ENCODE measurements at regions of chr2 and their contacts with region 1.

Region 1: DNA sequence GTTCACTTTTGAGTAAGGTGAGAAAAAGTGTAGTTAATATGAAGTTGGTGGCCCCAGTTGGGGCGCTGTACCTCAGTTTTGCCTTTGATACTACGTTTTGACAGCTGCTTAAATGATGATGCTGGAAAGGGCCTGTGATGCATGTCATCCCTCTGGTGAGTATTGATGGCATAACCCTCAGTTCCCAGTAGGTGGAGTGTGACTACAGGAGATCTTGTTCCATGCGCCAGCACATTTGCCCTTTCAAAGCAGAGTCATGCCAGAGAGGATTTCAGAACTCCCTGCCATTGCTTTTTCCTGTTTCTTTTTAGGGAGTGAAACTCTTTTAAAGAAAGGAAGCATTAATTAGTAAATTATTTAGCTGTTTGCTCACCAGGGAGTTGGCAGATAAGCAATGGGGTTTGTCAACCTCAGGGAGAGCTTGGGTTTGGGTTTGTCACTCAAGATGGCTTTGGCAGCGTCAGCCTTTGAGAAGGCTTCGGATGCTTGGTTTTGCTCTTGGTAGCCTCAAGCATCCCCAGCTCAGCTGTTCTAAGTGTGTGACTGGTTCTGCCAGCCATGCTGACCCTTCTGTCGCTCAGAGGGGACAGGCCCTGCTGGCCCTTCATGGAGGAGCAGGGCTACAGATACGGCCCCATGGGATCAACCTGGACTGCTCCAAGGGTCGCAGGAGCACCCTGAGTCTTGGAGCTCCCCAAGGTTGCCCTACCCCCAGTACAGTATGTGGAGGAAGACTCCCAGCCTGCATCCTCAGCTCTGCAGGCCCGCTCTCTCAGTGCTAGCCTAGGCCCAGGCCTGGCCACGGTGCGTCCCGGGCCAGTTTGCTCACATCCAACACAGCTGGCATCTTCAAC is 29.1 kb downstream of the ARMC9 start:
- DNase-seq: peak in 8 of 9 donors; percentile 21 to 55 (median 34)
- ATAC-seq: peak; percentile 95
- H3K4me3 ChIP-seq: no peak overlapping the region
- H3K4me3 Mint-ChIP-seq: no peak overlapping the region
- H3K27ac ChIP-seq: no peak overlapping the region
- H3K27ac Mint-ChIP-seq: peak overlapping the region in 1 of 9 donors; percentile 5
- H3K4me1 ChIP-seq: no peaks in the 10 kb centered on the region
- H3K4me1 Mint-ChIP-seq: no peaks in the 10 kb centered on the region
- H3K27me3 ChIP-seq: peaks cover 0 to 3% of the 10 kb centered on the region in 2 donors
- H3K27me3 Mint-ChIP-seq: no peaks in the 10 kb centered on the region

Region 2: GRCh38 chr2:231104115-231104713 is 123.3 kb before region 1 on chr2:
- CTCF ChIA-PET with region 1: interaction called, 3 read pairs
- POLR2A ChIA-PET with region 1: no interaction called
- intact Hi-C with region 1: loop called in 1 of 2 experiments (anchors 1 kb)
- DNase-seq: peak in 8 of 9 donors; percentile 10 to 58 (median 40)
- ATAC-seq: peak; percentile 84
- H3K4me3 ChIP-seq: no peak overlapping the region
- H3K4me3 Mint-ChIP-seq: no peak overlapping the region
- H3K27ac ChIP-seq: no peak overlapping the region
- H3K27ac Mint-ChIP-seq: peak overlapping the region in 2 of 9 donors; percentile 10 to 12
- H3K4me1 ChIP-seq: no peaks in the 10 kb centered on the region
- H3K4me1 Mint-ChIP-seq: peaks cover 0 to 6% (median 5%) of the 10 kb centered on the region in 7 donors
- H3K27me3 ChIP-seq: no peaks in the 10 kb centered on the region
- H3K27me3 Mint-ChIP-seq: no peaks in the 10 kb centered on the region

Region 3: GRCh38 chr2:231191896-231192872 is 35.4 kb before region 1 on chr2:
- CTCF ChIA-PET with region 1: no interaction called
- POLR2A ChIA-PET with region 1: no interaction called
- intact Hi-C with region 1: no loop called
- DNase-seq: no peak
- ATAC-seq: no peak
- H3K4me3 ChIP-seq: no peak overlapping the region
- H3K4me3 Mint-ChIP-seq: no peak overlapping the region
- H3K27ac ChIP-seq: no peak overlapping the region
- H3K27ac Mint-ChIP-seq: no peak overlapping the region
- H3K4me1 ChIP-seq: no peaks in the 10 kb centered on the region
- H3K4me1 Mint-ChIP-seq: peaks cover 0 to 3% (median 0%) of the 10 kb centered on the region in 7 donors
- H3K27me3 ChIP-seq: peaks cover 0 to 3% of the 10 kb centered on the region in 2 donors
- H3K27me3 Mint-ChIP-seq: peaks cover 16 to 64% (median 24%) of the 10 kb centered on the region in 5 donors

Region 4: GRCh38 chr2:231411831-231412617 is 184.5 kb after region 1 on chr2:
- CTCF ChIA-PET with region 1: no interaction called
- POLR2A ChIA-PET with region 1: no interaction called
- intact Hi-C with region 1: loop called (anchors 1 to 2 kb)
- DNase-seq: peak; percentile 10 to 63 (median 40)
- ATAC-seq: peak; percentile 97
- H3K4me3 ChIP-seq: peak overlapping the region; percentile 20
- H3K4me3 Mint-ChIP-seq: peak overlapping the region; percentile 44 to 73 (median 66)
- H3K27ac ChIP-seq: no peak overlapping the region
- H3K27ac Mint-ChIP-seq: no peak overlapping the region
- H3K4me1 ChIP-seq: peaks cover 0 to 9% of the 10 kb centered on the region in 2 donors
- H3K4me1 Mint-ChIP-seq: peaks cover under 1 to 8% (median 5%) of the 10 kb centered on the region in 7 donors
- H3K27me3 ChIP-seq: peaks cover 4 to 8% of the 10 kb centered on the region in 2 donors
- H3K27me3 Mint-ChIP-seq: peaks cover 17 to 48% (median 32%) of the 10 kb centered on the region in 5 donors

Region 5: GRCh38 chr2:231452799-231453508 is 225.4 kb after region 1 on chr2:
- CTCF ChIA-PET with region 1: interaction called, 9 read pairs
- POLR2A ChIA-PET with region 1: no interaction called
- intact Hi-C with region 1: loop called (anchors 1 kb)
- DNase-seq: peak in 1 of 9 donors; percentile 20
- ATAC-seq: peak; percentile 16
- H3K4me3 ChIP-seq: no peak overlapping the region
- H3K4me3 Mint-ChIP-seq: peak overlapping the region in 2 of 10 donors; percentile 37 to 53
- H3K27ac ChIP-seq: no peak overlapping the region
- H3K27ac Mint-ChIP-seq: peak overlapping the region in 7 of 9 donors; percentile 31 to 84 (median 62)
- H3K4me1 ChIP-seq: no peaks in the 10 kb centered on the region
- H3K4me1 Mint-ChIP-seq: peaks cover 10 to 21% (median 12%) of the 10 kb centered on the region in 7 donors
- H3K27me3 ChIP-seq: no peaks in the 10 kb centered on the region
- H3K27me3 Mint-ChIP-seq: no peaks in the 10 kb centered on the region